ENCODE measurements at regions of chr4 and their contacts with region 1.

Region 1: GRCh38 chr4:58522765-58523382 is 1412.7 kb upstream of the IGFBP7 start:
- DNase-seq: no peak
- ATAC-seq: no peak
- H3K4me3 ChIP-seq: no peak overlapping the region
- H3K4me3 Mint-ChIP-seq: no peak overlapping the region
- H3K27ac ChIP-seq: no peak overlapping the region
- H3K27ac Mint-ChIP-seq: no peak overlapping the region
- H3K4me1 ChIP-seq: no peaks in the 10 kb centered on the region
- H3K4me1 Mint-ChIP-seq: no peaks in the 10 kb centered on the region
- H3K27me3 ChIP-seq: no peaks in the 10 kb centered on the region
- H3K27me3 Mint-ChIP-seq: no peaks in the 10 kb centered on the region

Region 2: DNA sequence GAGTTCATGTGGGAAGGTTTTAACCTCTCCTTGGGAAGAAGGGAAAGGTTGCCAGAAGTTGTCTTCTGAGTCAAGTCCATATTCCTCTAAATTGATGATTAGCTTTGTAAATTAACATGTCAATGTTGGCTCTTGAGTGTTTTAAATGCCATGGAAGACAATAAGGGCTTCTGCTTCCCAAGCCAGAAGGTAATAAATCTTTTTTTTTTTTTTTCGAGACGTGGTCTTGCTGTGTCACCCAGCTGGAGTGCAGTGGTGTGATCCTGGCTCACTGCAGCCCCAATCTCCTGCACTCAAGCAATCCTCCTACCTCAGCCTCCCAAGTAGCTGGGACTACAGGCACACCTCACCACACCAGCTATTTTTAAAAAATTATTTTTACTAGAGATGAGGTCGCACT is 1620.2 kb before region 1 on chr4:
- CTCF ChIA-PET with region 1: no interaction called
- POLR2A ChIA-PET with region 1: no interaction called
- intact Hi-C with region 1: no loop called
- DNase-seq: no peak
- ATAC-seq: no peak
- H3K4me3 ChIP-seq: no peak overlapping the region
- H3K4me3 Mint-ChIP-seq: no peak overlapping the region
- H3K27ac ChIP-seq: no peak overlapping the region
- H3K27ac Mint-ChIP-seq: no peak overlapping the region
- H3K4me1 ChIP-seq: peaks cover 0 to 4% of the 10 kb centered on the region in 2 donors
- H3K4me1 Mint-ChIP-seq: peaks cover 8 to 18% (median 15%) of the 10 kb centered on the region in 7 donors
- H3K27me3 ChIP-seq: no peaks in the 10 kb centered on the region
- H3K27me3 Mint-ChIP-seq: peaks cover 0 to 20% (median 0%) of the 10 kb centered on the region in 5 donors

Region 3: GRCh38 chr4:58553674-58554073 is 30.8 kb after region 1 on chr4:
- CTCF ChIA-PET with region 1: no interaction called
- POLR2A ChIA-PET with region 1: no interaction called
- intact Hi-C with region 1: loop called in 1 of 2 experiments (anchors 1 kb)
- DNase-seq: no peak
- ATAC-seq: no peak
- H3K4me3 ChIP-seq: no peak overlapping the region
- H3K4me3 Mint-ChIP-seq: no peak overlapping the region
- H3K27ac ChIP-seq: no peak overlapping the region
- H3K27ac Mint-ChIP-seq: no peak overlapping the region
- H3K4me1 ChIP-seq: no peaks in the 10 kb centered on the region
- H3K4me1 Mint-ChIP-seq: peaks cover 0 to 1% (median 0%) of the 10 kb centered on the region in 7 donors
- H3K27me3 ChIP-seq: no peaks in the 10 kb centered on the region
- H3K27me3 Mint-ChIP-seq: no peaks in the 10 kb centered on the region

Measured in naive thymus-derived CD4-positive, alpha-beta T cell (primary cell).